Cardiac septum (tissue), 1 donor: ENCODE measurements at regions of chr2 and their contacts with region 1.

Region 1: GRCh38 chr2:43158259-43158880 is 68.0 kb downstream of the ZFP36L2 start:
- DNase-seq: no peak

Region 2: DNA sequence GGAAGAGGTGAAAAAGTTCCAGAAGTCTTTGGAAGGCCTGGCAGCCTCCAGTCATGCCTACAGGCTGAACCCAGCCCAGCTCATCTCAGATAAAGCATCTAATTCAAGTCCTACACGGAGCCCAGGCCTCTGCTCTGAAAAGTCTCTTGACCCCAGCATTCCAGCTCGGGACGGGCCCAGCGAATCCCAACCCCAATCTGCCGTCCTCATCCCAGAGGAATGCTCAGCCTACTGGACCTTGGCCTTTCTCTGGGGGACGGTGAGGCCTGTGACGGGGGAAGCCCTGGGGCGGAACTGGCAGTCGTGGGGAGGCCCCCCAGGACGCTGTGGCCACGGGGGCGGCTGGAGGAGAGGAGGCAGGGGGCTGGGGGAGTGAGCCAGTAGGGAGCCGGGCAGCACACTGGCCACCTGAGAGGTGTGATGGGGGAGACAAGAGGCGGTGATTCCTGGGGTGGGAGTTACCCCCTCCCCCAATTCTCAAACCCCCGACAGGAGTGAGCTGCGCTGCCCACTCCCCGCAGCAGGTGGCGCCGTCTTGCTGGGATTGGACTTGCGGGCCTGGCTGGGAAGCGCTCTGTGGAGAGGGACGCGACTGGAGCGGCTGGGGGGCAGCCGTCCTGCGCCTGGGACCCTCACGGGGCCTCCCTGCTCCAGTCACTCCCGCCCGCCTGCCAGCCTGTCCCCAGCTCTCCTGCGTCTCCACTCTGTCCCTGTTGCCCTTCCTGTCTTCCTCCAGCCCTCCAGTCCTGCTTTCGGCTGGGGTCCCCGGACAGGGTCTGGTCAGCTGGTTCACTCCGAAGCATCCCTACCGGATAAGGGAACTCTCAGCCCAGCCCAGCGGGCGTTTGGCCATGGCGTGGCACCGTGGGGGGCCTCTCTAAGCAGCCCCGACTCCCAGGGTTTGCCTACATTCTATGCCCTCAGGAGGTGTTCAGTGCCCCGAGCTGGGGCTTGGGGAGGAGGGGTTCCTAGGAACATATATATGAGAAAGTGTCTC is 183.4 kb before region 1 on chr2:
- intact Hi-C with region 1: no loop called
- DNase-seq: peak; percentile 90

Region 3: GRCh38 chr2:43210467-43211303 is 52.3 kb after region 1 on chr2:
- intact Hi-C with region 1: loop called (anchors 5 kb)
- DNase-seq: peak; percentile 86